ENCODE measurements at regions of chr3 and their contacts with region 1.

Region 1: DNA sequence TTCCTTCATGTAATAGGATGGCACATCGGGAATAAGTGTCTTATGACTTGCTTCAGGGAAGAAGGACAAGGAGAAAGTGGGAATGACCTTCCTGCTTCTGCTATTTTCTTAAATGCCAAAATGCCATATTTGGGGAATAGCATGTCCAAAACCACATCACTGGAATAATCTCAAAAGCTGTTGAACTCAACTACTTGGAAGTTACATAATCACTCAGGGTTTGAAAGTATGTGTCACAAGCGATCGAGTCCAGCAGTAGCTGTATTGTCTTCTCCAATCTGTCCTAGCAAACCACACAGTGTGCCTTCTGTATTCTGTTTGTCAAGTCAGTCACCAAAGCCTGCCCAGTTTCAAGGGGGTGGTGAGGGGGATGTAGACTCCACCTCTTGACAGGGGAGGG is 58.3 kb upstream of the GADL1 start:
- DNase-seq: no peak
- H3K4me3 ChIP-seq: no peak overlapping the region
- H3K27ac ChIP-seq: no peak overlapping the region
- H3K4me1 ChIP-seq: no peaks in the 10 kb centered on the region
- CTCF ChIP-seq: no peak

Region 2: GRCh38 chr3:31232055-31233025 is 279.6 kb after region 1 on chr3:
- CTCF ChIA-PET with region 1: no interaction called
- POLR2A ChIA-PET with region 1: interaction called, 12 read pairs
- intact Hi-C with region 1: no loop called
- DNase-seq: peak; percentile 46
- H3K4me3 ChIP-seq: no peak overlapping the region
- H3K27ac ChIP-seq: no peak overlapping the region
- H3K4me1 ChIP-seq: peaks cover 59% of the 10 kb centered on the region
- CTCF ChIP-seq: no peak